Right cardiac atrium (tissue), 5 donors: ENCODE measurements at regions of chr9 and their contacts with region 1.

Region 1: DNA sequence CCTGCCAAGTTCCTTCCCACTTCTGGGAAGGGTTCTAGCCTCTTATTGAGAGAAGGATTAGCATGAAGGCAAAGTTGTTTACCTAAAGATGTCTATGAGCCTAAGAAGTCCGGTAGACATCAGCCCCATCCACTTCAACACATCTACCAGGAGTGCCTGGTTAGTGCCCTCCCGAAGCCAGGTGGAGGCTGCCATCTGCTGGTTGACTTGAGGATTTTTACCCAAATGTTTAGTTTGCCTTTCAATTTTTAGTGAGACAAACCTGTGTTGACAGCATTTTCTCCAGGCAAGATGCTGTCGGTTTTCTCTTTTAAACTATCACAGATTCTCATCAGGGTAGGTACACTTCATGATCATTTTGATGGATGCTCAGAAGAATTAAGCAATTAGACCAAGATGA is 83.6 kb upstream of the TNFSF8 start:
- DNase-seq: peak; percentile 65 to 78 (median 74)
- ATAC-seq: peak; percentile 75 to 76
- H3K4me3 ChIP-seq: no peak overlapping the region
- H3K27ac ChIP-seq: no peak overlapping the region
- H3K4me1 ChIP-seq: no peaks in the 10 kb centered on the region
- H3K27me3 ChIP-seq: no peaks in the 10 kb centered on the region

Region 2: GRCh38 chr9:114405294-114406034 is 608.5 kb before region 1 on chr9:
- intact Hi-C with region 1: loop called in 2 of 4 experiments (anchors 5 to 10 kb)
- DNase-seq: peak; percentile 81 to 86 (median 81)
- ATAC-seq: peak; percentile 87 to 91
- H3K4me3 ChIP-seq: no peak overlapping the region
- H3K27ac ChIP-seq: no peak overlapping the region
- H3K4me1 ChIP-seq: no peaks in the 10 kb centered on the region
- H3K27me3 ChIP-seq: no peaks in the 10 kb centered on the region

Region 3: DNA sequence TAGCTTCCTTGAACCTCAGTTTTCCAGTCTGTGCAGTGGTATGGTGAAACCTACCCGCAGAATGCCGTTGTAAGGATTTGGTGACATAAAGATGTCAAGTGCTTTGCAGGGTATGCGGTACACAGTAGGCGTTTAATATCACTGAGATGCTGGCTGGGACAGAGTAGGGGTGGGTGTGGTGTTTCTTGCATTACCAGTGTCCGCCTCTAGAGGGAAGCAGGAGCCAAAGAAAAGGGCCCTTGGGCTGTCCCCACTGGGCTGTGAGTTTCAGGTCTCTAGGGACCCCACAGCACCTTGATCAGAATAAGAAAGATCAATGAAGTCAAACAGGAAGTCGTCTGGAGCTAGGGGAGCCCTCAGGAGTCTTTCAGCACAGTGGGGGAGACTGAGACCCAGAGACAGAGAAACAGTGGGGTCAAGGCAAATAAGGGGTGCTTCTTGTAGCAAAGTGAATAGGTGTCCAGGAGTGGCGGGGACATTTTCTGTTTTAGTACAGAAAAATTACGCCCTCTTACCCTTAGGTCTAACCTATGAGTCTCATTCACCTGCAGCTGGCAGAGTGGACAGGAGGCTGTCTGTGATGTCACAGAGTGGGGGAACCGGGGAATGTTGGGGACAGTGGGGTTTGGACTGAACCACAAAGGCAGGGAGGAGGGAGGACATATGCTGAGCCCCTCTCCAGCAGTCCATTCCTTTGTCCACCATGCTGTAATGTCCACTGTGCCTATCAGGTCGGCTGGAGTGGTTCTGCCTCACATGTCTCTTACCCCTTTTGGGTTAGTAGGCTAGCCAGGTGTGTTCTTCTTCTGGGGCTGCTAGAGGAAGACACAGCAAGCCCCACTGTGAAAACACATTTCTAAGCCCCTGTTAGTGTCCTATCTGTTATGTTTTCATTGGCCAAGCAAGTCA is 351.7 kb before region 1 on chr9:
- intact Hi-C with region 1: loop called in 2 of 4 experiments (anchors 10 kb)
- DNase-seq: peak in 2 of 3 donors; percentile 19 to 53
- ATAC-seq: peak; percentile 75 to 76
- H3K4me3 ChIP-seq: no peak overlapping the region
- H3K27ac ChIP-seq: no peak overlapping the region
- H3K4me1 ChIP-seq: no peaks in the 10 kb centered on the region
- H3K27me3 ChIP-seq: no peaks in the 10 kb centered on the region

Region 4: GRCh38 chr9:114681594-114682332 is 332.2 kb before region 1 on chr9 and contains the start of gene TEX48:
- intact Hi-C with region 1: loop called in 2 of 4 experiments (anchors 10 kb)
- DNase-seq: peak; percentile 45 to 68 (median 64)
- ATAC-seq: peak; percentile 62 to 65
- H3K4me3 ChIP-seq: no peak within 1 kb of the TSS
- H3K27ac ChIP-seq: no peak within 1 kb of the TSS
- H3K4me1 ChIP-seq: no peaks in the 10 kb centered on the region
- H3K27me3 ChIP-seq: no peaks in the 10 kb centered on the region
- total RNA-seq, gene TEX48: not detected

Region 5: DNA sequence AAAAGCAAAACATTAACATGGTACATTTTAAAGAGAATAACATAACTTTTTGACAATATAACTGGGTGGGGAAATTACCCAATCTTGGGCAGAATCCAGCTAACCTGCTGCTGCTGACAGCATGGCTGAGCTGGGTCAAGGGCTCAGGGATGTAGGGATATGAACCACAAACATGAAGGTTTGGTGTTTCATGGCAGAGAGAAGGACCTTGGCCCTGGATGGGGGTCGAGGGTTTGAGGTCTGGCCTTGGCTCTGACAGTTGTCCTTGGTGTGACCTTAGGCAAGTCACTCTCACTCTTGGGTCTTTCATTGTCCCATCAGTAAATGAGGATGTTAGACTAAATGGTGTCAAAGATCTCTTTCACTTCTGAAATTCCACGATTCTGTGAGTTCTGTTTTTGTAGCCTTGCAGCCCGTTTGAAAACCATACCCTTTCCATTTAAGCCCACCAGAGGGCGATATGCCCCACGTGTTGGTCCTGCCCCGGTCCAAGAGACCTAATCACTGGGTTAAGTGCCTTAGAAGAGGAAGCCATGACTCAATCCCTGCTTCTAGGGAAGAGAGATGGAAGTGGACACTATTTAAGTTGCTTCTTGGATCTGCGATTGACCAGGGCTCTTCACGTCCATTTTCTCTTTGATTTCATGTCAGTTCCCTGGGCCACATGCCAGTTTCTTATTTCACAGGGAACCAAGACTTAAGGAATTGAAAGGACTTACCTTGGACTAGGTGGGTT is 275.2 kb before region 1 on chr9:
- intact Hi-C with region 1: loop called in 3 of 4 experiments (anchors 5 kb)
- DNase-seq: peak; percentile 54 to 70 (median 70)
- ATAC-seq: peak; percentile 85 to 94
- H3K4me3 ChIP-seq: no peak overlapping the region
- H3K27ac ChIP-seq: no peak overlapping the region
- H3K4me1 ChIP-seq: no peaks in the 10 kb centered on the region
- H3K27me3 ChIP-seq: no peaks in the 10 kb centered on the region

Region 6: GRCh38 chr9:114889802-114890251 is 124.2 kb before region 1 on chr9:
- intact Hi-C with region 1: no loop called
- DNase-seq: no peak
- ATAC-seq: no peak
- H3K4me3 ChIP-seq: no peak overlapping the region
- H3K27ac ChIP-seq: no peak overlapping the region
- H3K4me1 ChIP-seq: no peaks in the 10 kb centered on the region
- H3K27me3 ChIP-seq: no peaks in the 10 kb centered on the region

Region 7: DNA sequence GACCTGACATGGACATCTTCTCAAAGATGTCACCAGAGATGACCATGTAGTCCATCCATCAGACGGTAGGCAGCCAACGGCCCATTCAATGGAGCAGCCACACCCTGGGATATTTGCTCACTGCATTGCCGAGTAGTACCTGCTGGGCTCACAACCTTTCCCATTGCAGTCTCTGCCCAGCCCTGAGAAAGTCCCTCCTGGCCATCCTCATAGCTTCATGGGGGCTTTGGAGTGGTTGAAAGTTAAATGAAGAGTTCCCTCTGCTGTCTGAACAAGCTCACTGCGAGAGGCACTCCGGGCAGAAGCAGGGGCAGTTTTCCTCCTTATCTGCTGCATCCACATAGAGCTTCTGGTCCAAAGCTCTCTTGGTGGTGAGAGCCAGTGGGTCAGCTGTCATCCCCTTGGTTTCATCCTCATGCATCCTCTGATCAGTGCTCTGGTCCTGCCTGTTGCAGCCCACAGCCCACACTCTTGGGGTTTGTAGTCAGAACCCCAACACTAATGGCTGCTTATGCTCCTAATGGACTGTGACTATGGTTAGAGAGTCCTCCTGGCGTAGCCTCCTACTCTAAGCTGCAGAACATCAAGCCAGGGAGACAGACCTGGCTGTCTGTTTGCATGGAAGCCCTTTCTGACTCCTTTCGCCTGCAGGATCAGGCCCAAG is 107.0 kb before region 1 on chr9:
- intact Hi-C with region 1: loop called in 1 of 4 experiments (anchors 10 kb)
- DNase-seq: no peak
- ATAC-seq: peak; percentile 11 to 61
- H3K4me3 ChIP-seq: no peak overlapping the region
- H3K27ac ChIP-seq: no peak overlapping the region
- H3K4me1 ChIP-seq: no peaks in the 10 kb centered on the region
- H3K27me3 ChIP-seq: no peaks in the 10 kb centered on the region

Region 8: DNA sequence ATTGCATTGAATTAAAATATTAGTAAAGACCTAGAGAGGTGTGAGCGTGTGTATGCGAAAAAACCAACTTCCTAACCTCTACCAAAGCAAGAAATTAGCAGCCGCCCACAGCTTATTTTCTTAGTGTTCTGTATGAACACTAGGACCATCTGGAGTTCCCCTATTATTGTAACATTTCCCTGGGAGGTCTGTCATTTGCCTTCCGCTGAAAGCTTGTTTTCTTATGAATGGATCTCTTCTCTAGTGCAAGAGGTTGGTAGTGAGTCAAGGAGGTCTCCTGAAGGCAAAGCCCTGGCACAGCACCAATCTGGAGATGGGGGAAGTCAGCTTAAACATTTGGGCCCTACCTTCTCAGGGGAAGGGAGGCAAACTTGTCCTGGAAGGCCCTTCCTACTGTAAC is 94.4 kb before region 1 on chr9:
- intact Hi-C with region 1: loop called in 2 of 4 experiments (anchors 5 to 10 kb)
- DNase-seq: no peak
- ATAC-seq: no peak
- H3K4me3 ChIP-seq: no peak overlapping the region
- H3K27ac ChIP-seq: no peak overlapping the region
- H3K4me1 ChIP-seq: no peaks in the 10 kb centered on the region
- H3K27me3 ChIP-seq: no peaks in the 10 kb centered on the region

Region 9: GRCh38 chr9:114945616-114946412 is 68.2 kb before region 1 on chr9:
- intact Hi-C with region 1: no loop called
- DNase-seq: no peak
- ATAC-seq: no peak
- H3K4me3 ChIP-seq: no peak overlapping the region
- H3K27ac ChIP-seq: no peak overlapping the region
- H3K4me1 ChIP-seq: no peaks in the 10 kb centered on the region
- H3K27me3 ChIP-seq: no peaks in the 10 kb centered on the region

Region 10: GRCh38 chr9:115278326-115279035 is 264.5 kb after region 1 on chr9:
- intact Hi-C with region 1: no loop called
- DNase-seq: no peak
- ATAC-seq: no peak
- H3K4me3 ChIP-seq: no peak overlapping the region
- H3K27ac ChIP-seq: no peak overlapping the region
- H3K4me1 ChIP-seq: no peaks in the 10 kb centered on the region
- H3K27me3 ChIP-seq: no peaks in the 10 kb centered on the region